ENCODE measurements at regions of chr5 and their contacts with region 1.

Region 1: DNA sequence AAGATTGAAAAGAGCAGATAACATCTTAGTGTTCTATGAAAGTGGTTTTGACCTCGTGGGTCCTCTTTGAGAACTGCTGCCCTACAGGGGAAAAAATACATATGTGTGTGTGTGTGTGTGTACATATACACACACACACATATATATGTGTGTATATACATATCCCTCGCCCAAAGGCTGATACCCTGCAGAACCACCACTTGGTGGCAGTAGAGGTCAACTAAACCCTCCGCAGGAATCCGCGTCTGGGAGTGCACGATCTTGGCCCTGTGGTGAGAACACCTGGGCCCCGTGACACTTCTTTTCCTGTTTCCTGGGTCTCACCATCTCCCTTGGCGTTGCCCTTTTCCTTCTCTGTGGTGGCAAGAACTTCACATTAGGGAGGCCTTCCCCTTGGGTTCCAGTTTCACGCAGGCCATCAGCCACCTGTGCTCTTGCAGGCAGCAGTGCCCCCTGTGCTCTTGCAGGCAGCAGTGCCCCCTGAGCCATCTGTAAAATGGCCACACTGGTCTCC is 8.2 kb downstream of the IL9 start:
- DNase-seq: peak; percentile 88
- H3K4me3 Mint-ChIP-seq: no peak overlapping the region
- H3K27ac Mint-ChIP-seq: no peak overlapping the region
- H3K4me1 Mint-ChIP-seq: peaks cover 12% of the 10 kb centered on the region
- H3K27me3 Mint-ChIP-seq: peaks cover 38% of the 10 kb centered on the region
- CTCF ChIP-seq: peak; percentile 88

Region 2: GRCh38 chr5:136062366-136063274 is 175.2 kb after region 1 on chr5:
- CTCF ChIA-PET with region 1: no interaction called
- intact Hi-C with region 1: loop called (anchors 1 kb)
- DNase-seq: peak; percentile 55
- H3K4me3 Mint-ChIP-seq: no peak overlapping the region
- H3K27ac Mint-ChIP-seq: no peak overlapping the region
- H3K4me1 Mint-ChIP-seq: peaks cover 28% of the 10 kb centered on the region
- H3K27me3 Mint-ChIP-seq: no peaks in the 10 kb centered on the region
- CTCF ChIP-seq: peak; percentile 34

Region 3: DNA sequence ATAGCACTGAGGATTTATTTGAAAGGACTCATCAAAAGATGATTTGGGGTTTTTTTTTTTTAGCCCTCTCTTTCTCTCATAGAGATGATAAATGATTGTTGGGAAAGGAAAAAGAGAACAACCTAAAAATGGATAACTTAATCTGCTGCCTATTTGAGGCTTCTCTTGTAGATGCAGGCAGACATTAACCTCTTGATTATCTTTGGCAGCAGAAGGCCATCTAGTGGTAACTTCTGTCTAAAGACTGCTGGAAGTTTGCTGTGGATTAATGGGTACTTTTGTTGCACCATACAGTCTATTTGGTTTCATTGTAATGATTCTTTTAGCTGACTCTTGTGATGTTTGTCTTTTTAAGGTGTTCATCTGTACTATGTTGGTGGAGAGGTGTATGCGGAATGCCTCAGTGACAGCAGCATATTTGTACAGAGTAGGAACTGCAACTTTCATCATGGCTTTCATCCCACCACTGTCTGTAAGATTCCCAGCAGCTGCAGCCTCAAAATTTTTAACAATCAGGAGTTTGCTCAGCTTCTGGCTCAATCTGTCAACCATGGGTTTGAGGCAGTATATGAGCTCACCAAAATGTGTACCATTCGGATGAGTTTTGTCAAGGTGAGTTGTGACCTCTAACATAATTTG is 286.7 kb after region 1 on chr5:
- CTCF ChIA-PET with region 1: interaction called, 3 read pairs
- intact Hi-C with region 1: loop called (anchors 1 kb)
- DNase-seq: no peak
- H3K4me3 Mint-ChIP-seq: no peak overlapping the region
- H3K27ac Mint-ChIP-seq: no peak overlapping the region
- H3K4me1 Mint-ChIP-seq: no peaks in the 10 kb centered on the region
- H3K27me3 Mint-ChIP-seq: no peaks in the 10 kb centered on the region
- CTCF ChIP-seq: peak; percentile 58

Region 4: GRCh38 chr5:136374003-136374402 is 486.6 kb after region 1 on chr5:
- CTCF ChIA-PET with region 1: no interaction called
- intact Hi-C with region 1: no loop called
- DNase-seq: peak; percentile 34
- H3K4me3 Mint-ChIP-seq: no peak overlapping the region
- H3K27ac Mint-ChIP-seq: no peak overlapping the region
- H3K4me1 Mint-ChIP-seq: no peaks in the 10 kb centered on the region
- H3K27me3 Mint-ChIP-seq: peaks cover 77% of the 10 kb centered on the region
- CTCF ChIP-seq: no peak

Region 5: GRCh38 chr5:136424835-136425584 is 537.6 kb after region 1 on chr5:
- CTCF ChIA-PET with region 1: no interaction called
- intact Hi-C with region 1: loop called (anchors 1 kb)
- DNase-seq: peak; percentile 91
- H3K4me3 Mint-ChIP-seq: no peak overlapping the region
- H3K27ac Mint-ChIP-seq: no peak overlapping the region
- H3K4me1 Mint-ChIP-seq: no peaks in the 10 kb centered on the region
- H3K27me3 Mint-ChIP-seq: peaks cover 76% of the 10 kb centered on the region
- CTCF ChIP-seq: peak; percentile 80

Measured in Calu3 (cell line).